ENCODE measurements at regions of chr1 and their contacts with region 1.

Region 1: GRCh38 chr1:145845514-145846161 is at the start of gene NUDT17:
- DNase-seq: peak; percentile 67 to 86
- H3K4me3 ChIP-seq: peak within 1 kb of the TSS; percentile 54 to 70
- H3K27ac ChIP-seq: peak within 1 kb of the TSS; percentile 81 to 84
- H3K4me1 ChIP-seq: peaks cover 0 to 33% (median 28%) of the 10 kb centered on the region in 4 donors
- H3K27me3 ChIP-seq: no peaks in the 10 kb centered on the region
- CTCF ChIP-seq: peak; percentile 90 to 95

Region 2: GRCh38 chr1:145912128-145912641 is 66.5 kb after region 1 on chr1:
- intact Hi-C with region 1: loop called (anchors 5 kb)
- DNase-seq: no peak
- H3K4me3 ChIP-seq: no peak overlapping the region
- H3K27ac ChIP-seq: no peak overlapping the region
- H3K4me1 ChIP-seq: peaks cover 0 to 33% (median 12%) of the 10 kb centered on the region in 4 donors
- H3K27me3 ChIP-seq: no peaks in the 10 kb centered on the region
- CTCF ChIP-seq: no peak

Region 3: DNA sequence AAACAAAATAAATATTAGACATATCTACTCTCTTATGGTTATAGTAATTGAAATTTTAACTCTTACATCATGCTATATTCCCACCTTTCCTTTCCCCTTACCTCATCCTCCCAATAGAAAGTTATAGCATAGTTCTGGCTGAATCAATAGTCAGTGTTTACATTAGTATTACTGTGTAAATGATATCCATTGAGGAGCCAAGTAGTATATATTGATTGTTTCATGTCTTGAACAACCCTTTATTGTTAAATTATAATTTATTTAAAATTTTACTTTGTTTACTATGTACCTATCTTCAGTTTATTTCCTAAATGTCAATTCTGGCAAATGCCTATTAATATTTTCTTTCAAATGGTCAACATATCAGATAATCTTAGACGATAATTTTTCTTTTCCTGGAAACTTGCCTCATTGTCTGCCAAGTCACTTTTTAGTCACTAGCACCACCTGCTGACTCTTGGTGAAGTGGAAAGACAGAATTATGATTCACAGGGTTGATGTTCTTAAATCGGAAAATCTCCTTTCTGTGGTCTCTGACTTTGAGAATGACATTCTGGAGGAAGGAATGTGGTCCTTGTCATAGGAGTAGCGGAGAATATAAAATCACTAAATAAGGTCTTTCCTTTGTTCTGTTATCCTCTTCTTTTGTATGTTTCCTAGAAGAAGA is 167.2 kb after region 1 on chr1:
- intact Hi-C with region 1: loop called (anchors 2 kb)
- DNase-seq: peak in 1 of 2 donors; percentile 55
- H3K4me3 ChIP-seq: no peak overlapping the region
- H3K27ac ChIP-seq: no peak overlapping the region
- H3K4me1 ChIP-seq: peaks cover 0 to 4% (median 0%) of the 10 kb centered on the region in 4 donors
- H3K27me3 ChIP-seq: no peaks in the 10 kb centered on the region
- CTCF ChIP-seq: peak; percentile 72 to 75

Measured in tibial artery (tissue), 4 donors.